K562 (cell line): ENCODE measurements at regions of chr11 and their contacts with region 1.

Region 1: GRCh38 chr11:121591405-121592033 is 138.8 kb upstream of the SORL1-AS1 start:
- DNase-seq: peak; percentile 63 to 75 (median 70)
- ATAC-seq: peak; percentile 95
- H3K4me3 ChIP-seq: no peak overlapping the region
- H3K27ac ChIP-seq: no peak overlapping the region
- H3K4me1 ChIP-seq: peaks cover 0 to 2% of the 10 kb centered on the region in 2 experiments; a peak in 2 of 5 replicates
- H3K27me3 ChIP-seq: peaks cover 0 to 20% of the 10 kb centered on the region in 2 experiments; a peak in 4 of 5 replicates
- CTCF ChIP-seq: peak; percentile 73 to 85 (median 74)
- EP300 ChIP-seq: no peak
- POLR2A ChIP-seq: no peak
- RAD21 ChIP-seq: peak; percentile 75 to 84

Region 2: GRCh38 chr11:120511116-120511819 is 1080.3 kb before region 1 on chr11 and contains the start of gene GRIK4:
- CTCF ChIA-PET with region 1: interaction called, 5 read pairs
- POLR2A ChIA-PET with region 1: no interaction called
- in situ Hi-C with region 1: no loop called
- intact Hi-C with region 1: loop called (anchors 1 kb)
- DNase-seq: peak; percentile 87 to 95 (median 92)
- ATAC-seq: peak; percentile 98
- H3K4me3 ChIP-seq: peak within 1 kb of the TSS; percentile 38
- H3K27ac ChIP-seq: no peak within 1 kb of the TSS
- H3K4me1 ChIP-seq: peaks cover 0 to 12% of the 10 kb centered on the region in 2 experiments; a peak in 2 of 5 replicates
- H3K27me3 ChIP-seq: peaks cover 41 to 68% of the 10 kb centered on the region in 2 experiments
- CTCF ChIP-seq: peak; percentile 88 to 94 (median 88)
- EP300 ChIP-seq: no peak
- POLR2A ChIP-seq: no peak
- RAD21 ChIP-seq: peak; percentile 91 to 94
- polyA plus RNA-seq, gene GRIK4: not detected

Region 3: GRCh38 chr11:120952461-120953434 is 638.8 kb before region 1 on chr11:
- CTCF ChIA-PET with region 1: no interaction called
- POLR2A ChIA-PET with region 1: no interaction called
- in situ Hi-C with region 1: no loop called
- intact Hi-C with region 1: loop called (anchors 5 kb)
- DNase-seq: peak; percentile 77 to 87 (median 84)
- ATAC-seq: peak; percentile 96
- H3K4me3 ChIP-seq: no peak overlapping the region
- H3K27ac ChIP-seq: no peak overlapping the region
- H3K4me1 ChIP-seq: no peaks in the 10 kb centered on the region; a peak in 1 of 5 replicates
- H3K27me3 ChIP-seq: peaks cover 0 to 34% of the 10 kb centered on the region in 2 experiments; a peak in 3 of 5 replicates
- CTCF ChIP-seq: peak; percentile 62 to 82 (median 73)
- EP300 ChIP-seq: no peak
- POLR2A ChIP-seq: no peak
- RAD21 ChIP-seq: peak; percentile 42 to 61

Region 4: DNA sequence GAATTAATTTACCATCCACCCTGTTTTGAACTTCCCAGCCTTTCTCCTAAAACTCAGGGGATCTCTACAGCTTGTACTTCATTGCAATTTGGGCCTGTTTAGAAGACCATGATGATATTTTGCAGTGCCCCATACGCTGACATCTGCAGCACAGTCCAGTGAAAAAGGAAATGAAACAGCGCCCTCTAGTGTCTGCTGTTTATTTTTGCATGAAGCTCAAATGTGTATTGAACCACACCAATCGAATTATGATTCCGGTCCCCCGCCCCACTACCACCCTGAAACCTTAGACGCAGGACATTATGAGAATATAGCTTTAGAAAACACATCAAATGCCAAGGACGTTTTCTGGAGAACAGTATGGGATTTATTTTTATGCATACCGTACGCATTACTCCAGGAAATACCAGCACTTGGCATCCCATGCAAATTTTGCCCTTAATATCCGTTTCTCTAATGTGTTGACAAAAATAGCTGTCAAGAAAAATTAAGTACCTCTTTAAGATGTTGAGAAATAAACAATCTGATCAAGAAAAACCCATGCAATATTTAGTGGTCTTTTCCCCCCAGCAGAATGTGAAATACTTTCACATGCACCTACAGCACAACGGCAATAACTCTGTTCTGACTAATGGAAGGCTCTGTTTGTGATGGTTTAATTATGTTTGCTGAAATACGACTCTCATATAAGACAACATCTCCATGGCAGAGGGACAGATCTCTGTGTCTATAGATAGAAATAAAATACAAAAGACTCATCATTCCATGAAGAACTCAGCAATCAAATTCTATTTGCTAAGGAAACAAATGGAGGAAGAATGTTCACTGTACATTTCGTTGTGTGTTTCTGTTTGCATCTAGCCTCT is 396.6 kb before region 1 on chr11:
- CTCF ChIA-PET with region 1: no interaction called
- POLR2A ChIA-PET with region 1: no interaction called
- in situ Hi-C with region 1: no loop called
- intact Hi-C with region 1: loop called (anchors 1 kb)
- DNase-seq: peak; percentile 46 to 76 (median 58)
- ATAC-seq: peak; percentile 95
- H3K4me3 ChIP-seq: no peak overlapping the region
- H3K27ac ChIP-seq: no peak overlapping the region
- H3K4me1 ChIP-seq: no peaks in the 10 kb centered on the region
- H3K27me3 ChIP-seq: peaks cover 0 to 2% of the 10 kb centered on the region in 2 experiments; a peak in 2 of 5 replicates
- CTCF ChIP-seq: peak; percentile 62 to 78 (median 71)
- EP300 ChIP-seq: no peak
- POLR2A ChIP-seq: no peak
- RAD21 ChIP-seq: peak; percentile 49 to 72

Region 5: GRCh38 chr11:121318848-121319834 is 272.4 kb before region 1 on chr11:
- CTCF ChIA-PET with region 1: interaction called, 3 read pairs
- POLR2A ChIA-PET with region 1: no interaction called
- in situ Hi-C with region 1: loop called (anchors 10 kb)
- intact Hi-C with region 1: loop called (anchors 1 kb)
- DNase-seq: peak in 2 of 4 experiments; percentile 21
- ATAC-seq: peak; percentile 85
- H3K4me3 ChIP-seq: no peak overlapping the region
- H3K27ac ChIP-seq: no peak overlapping the region
- H3K4me1 ChIP-seq: no peaks in the 10 kb centered on the region
- H3K27me3 ChIP-seq: no peaks in the 10 kb centered on the region; a peak in 1 of 5 replicates
- CTCF ChIP-seq: peak; percentile 54 to 66 (median 57)
- EP300 ChIP-seq: no peak
- POLR2A ChIP-seq: no peak
- RAD21 ChIP-seq: peak in 1 of 2 experiments; percentile 58; a peak in 2 of 4 replicates